Psoas muscle (tissue), 8 donors: ENCODE measurements at regions of chr3 and their contacts with region 1.

Region 1: DNA sequence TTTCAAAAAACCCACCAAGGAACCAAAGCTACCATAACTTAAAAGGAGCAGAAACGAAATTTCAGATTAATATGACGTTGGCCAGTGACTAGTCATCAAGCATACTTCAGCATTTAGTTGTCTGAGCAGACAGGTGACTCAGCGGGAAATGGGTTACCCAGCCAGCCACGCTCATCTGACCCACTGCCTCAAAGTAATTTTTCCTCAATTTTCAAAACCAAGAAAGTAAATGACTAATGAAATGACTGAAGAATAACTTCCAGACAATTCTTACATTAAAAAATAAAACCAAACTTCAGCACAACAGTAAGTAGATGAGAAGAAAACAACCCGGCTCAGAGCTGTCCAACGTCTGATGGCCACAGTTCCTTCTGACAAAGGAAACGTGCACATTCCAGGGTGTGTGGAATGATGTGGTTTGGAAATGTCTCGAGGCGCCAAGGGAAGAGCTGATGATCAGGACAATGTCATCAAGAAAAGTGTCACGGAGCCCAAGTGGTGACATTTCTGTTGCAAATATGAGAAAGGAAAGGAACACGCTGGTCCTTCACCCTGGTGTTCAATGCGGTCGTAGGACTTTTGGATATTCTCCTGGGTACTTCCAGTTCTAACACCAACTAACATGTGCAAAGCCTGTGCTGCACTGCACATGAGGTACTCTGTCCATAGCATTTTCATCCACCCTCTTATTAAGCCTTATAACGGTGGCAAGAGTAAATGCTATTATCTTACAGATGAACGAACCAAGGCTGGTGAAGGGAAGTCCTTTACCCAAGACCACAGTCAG is 79.1 kb downstream of the FOXP1 start:
- DNase-seq: no peak
- ATAC-seq: peak in 1 of 4 donors; percentile 65
- H3K4me3 ChIP-seq: no peak overlapping the region
- H3K27ac ChIP-seq: no peak overlapping the region
- H3K4me1 ChIP-seq: peaks cover 7% of the 10 kb centered on the region
- H3K27me3 ChIP-seq: no peaks in the 10 kb centered on the region
- CTCF ChIP-seq: no peak

Region 2: GRCh38 chr3:71210257-71211007 is 294.0 kb before region 1 on chr3:
- intact Hi-C with region 1: no loop called
- DNase-seq: no peak
- ATAC-seq: peak; percentile 70 to 95 (median 94)
- H3K4me3 ChIP-seq: no peak overlapping the region
- H3K27ac ChIP-seq: peak overlapping the region; percentile 67
- H3K4me1 ChIP-seq: peaks cover 25% of the 10 kb centered on the region
- H3K27me3 ChIP-seq: no peaks in the 10 kb centered on the region
- CTCF ChIP-seq: no peak

Region 3: DNA sequence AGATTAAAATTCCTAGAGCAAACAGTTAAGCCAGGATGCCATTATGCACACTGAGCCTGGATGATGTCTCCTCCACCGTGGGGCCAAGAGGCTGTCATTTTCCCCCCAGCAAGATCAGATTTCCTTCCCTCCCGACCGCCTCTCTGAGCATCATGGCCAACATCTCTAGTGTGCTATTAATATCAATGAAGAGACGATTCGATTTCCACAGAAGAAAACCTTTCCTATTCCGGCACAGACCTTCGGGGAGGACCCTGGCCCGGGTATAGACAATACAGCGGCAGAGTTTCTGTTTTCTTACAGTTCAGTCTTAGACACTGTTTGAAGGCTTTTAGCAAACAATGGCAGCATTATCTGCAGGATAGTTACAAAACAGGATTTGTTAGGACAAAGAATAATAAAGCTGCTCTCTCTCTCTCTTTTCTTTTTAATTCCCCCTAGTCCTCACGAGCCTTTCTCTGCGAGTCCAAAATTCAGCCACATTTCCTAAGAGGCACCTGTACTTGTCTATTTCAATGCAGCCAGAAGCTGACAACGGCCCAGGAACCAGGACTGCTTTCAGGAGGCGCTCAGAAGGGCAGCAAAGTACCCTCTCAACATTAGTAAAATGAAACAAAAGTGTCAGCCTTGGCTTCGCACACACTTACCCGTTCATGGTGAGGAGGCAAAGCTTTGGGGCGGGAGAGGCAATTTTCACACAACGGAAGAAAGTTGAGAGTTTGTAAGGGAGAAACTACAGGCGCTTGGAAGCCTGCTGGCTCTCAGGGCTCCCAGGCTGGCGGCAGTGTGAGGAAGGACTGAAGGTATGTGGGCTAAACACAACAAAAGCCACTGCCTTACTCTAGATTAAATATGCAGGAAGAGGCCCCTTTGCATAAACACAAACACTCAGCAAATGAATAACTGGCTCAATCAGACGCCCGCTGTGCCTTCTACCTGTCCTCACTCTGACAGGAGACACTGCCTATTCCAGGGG is 198.9 kb before region 1 on chr3:
- intact Hi-C with region 1: loop called in 1 of 2 experiments (anchors 10 kb)
- DNase-seq: peak; percentile 20 to 64
- ATAC-seq: peak; percentile 93 to 98 (median 96)
- H3K4me3 ChIP-seq: peak overlapping the region; percentile 60
- H3K27ac ChIP-seq: peak overlapping the region; percentile 81
- H3K4me1 ChIP-seq: peaks cover 19% of the 10 kb centered on the region
- H3K27me3 ChIP-seq: no peaks in the 10 kb centered on the region
- CTCF ChIP-seq: no peak